OCI-LY7 (cell line): ENCODE measurements at regions of chr1 and their contacts with region 1.

Region 1: GRCh38 chr1:222739465-222739864 is 2.5 kb downstream of the FAM177B start:
- DNase-seq: no peak
- H3K4me3 ChIP-seq: no peak overlapping the region
- H3K27ac ChIP-seq: no peak overlapping the region
- H3K4me1 ChIP-seq: peaks cover 3% of the 10 kb centered on the region
- CTCF ChIP-seq: no peak

Region 2: GRCh38 chr1:222772996-222773379 is 33.5 kb after region 1 on chr1:
- CTCF ChIA-PET with region 1: no interaction called
- POLR2A ChIA-PET with region 1: no interaction called
- intact Hi-C with region 1: loop called (anchors 2 kb)
- DNase-seq: peak; percentile 87
- H3K4me3 ChIP-seq: peak overlapping the region; percentile 27
- H3K27ac ChIP-seq: peak overlapping the region; percentile 82
- H3K4me1 ChIP-seq: peaks cover 25% of the 10 kb centered on the region
- CTCF ChIP-seq: no peak

Region 3: GRCh38 chr1:222798975-222799374 is 59.5 kb after region 1 on chr1:
- CTCF ChIA-PET with region 1: no interaction called
- POLR2A ChIA-PET with region 1: no interaction called
- intact Hi-C with region 1: no loop called
- DNase-seq: no peak
- H3K4me3 ChIP-seq: no peak overlapping the region
- H3K27ac ChIP-seq: no peak overlapping the region
- H3K4me1 ChIP-seq: no peaks in the 10 kb centered on the region
- CTCF ChIP-seq: no peak